Heart right ventricle (tissue), 16 donors: ENCODE measurements at regions of chr18 and their contacts with region 1.

Region 1: GRCh38 chr18:74251297-74252038 is 40.3 kb downstream of the CYB5A start:
- DNase-seq: no peak
- ATAC-seq: peak in 2 of 8 donors; percentile 5 to 32
- H3K4me3 ChIP-seq: no peak overlapping the region
- H3K27ac ChIP-seq: peak overlapping the region in 3 of 10 donors; percentile 23 to 74 (median 38)
- H3K4me1 ChIP-seq: peaks cover 0 to 44% (median 31%) of the 10 kb centered on the region in 9 donors
- H3K27me3 ChIP-seq: no peaks in the 10 kb centered on the region
- CTCF ChIP-seq: no peak

Region 2: GRCh38 chr18:74147779-74148542 is 103.5 kb before region 1 on chr18 and contains the starts of genes FBXO15 and TIMM21:
- intact Hi-C with region 1: loop called in 1 of 10 experiments (anchors 5 kb)
- DNase-seq: peak; percentile 96 to 97
- ATAC-seq: peak; percentile 96 to 98 (median 97)
- H3K4me3 ChIP-seq: peak within 1 kb of the TSS; percentile 62 to 96 (median 74)
- H3K27ac ChIP-seq: peak within 1 kb of the TSS; percentile 76 to 96 (median 90)
- H3K4me1 ChIP-seq: peaks cover 3 to 48% (median 36%) of the 10 kb centered on the region in 9 donors
- H3K27me3 ChIP-seq: no peaks in the 10 kb centered on the region
- CTCF ChIP-seq: no peak
- total RNA-seq, gene FBXO15: 0.19 to 1.3 (median 0.38) TPM in 7 of 10 donors, not detected in the others
- total RNA-seq, gene TIMM21: 81.9 to 141 (median 122) TPM

Region 3: GRCh38 chr18:74268933-74269620 is 17.6 kb after region 1 on chr18:
- intact Hi-C with region 1: no loop called
- DNase-seq: no peak
- ATAC-seq: peak; percentile 34 to 83 (median 70)
- H3K4me3 ChIP-seq: peak overlapping the region in 2 of 10 donors; percentile 1 to 5
- H3K27ac ChIP-seq: peak overlapping the region in 3 of 10 donors; percentile 5 to 68 (median 18)
- H3K4me1 ChIP-seq: peaks cover 6 to 46% (median 24%) of the 10 kb centered on the region in 9 donors
- H3K27me3 ChIP-seq: no peaks in the 10 kb centered on the region
- CTCF ChIP-seq: no peak

Region 4: GRCh38 chr18:74291771-74292540 is 40.5 kb after region 1 on chr18 and contains the start of gene CYB5A:
- intact Hi-C with region 1: loop called in 2 of 10 experiments (anchors 2 to 5 kb)
- DNase-seq: peak; percentile 99
- ATAC-seq: peak; percentile 98 to 100 (median 99)
- H3K4me3 ChIP-seq: peak within 1 kb of the TSS; percentile 59 to 100 (median 92)
- H3K27ac ChIP-seq: peak within 1 kb of the TSS in 9 of 10 donors; percentile 51 to 89 (median 76)
- H3K4me1 ChIP-seq: peaks cover 3 to 39% (median 28%) of the 10 kb centered on the region in 9 donors
- H3K27me3 ChIP-seq: no peaks in the 10 kb centered on the region
- CTCF ChIP-seq: no peak
- total RNA-seq, gene CYB5A: 61.0 to 121 (median 78.0) TPM

Region 5: DNA sequence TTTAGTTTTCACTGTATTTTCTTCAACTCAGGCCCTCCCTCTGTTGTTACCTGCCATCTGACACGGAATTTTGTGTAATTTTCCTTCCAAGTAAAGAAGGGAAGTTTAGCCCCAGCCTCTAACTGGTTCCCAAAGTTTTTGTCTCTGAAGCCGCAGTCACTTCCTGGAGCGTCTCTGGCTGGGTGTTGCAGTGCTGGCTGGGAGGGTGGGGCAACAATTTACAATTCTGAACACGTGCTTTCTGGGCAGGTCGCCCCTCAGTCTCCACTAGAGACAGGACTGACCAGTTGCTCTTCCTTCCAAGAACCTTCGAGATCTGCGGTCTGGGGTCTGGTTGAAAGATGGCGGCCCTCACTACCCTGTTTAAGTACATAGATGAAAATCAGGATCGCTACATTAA is 248.2 kb after region 1 on chr18:
- intact Hi-C with region 1: no loop called
- DNase-seq: peak; percentile 37 to 91
- ATAC-seq: peak in 4 of 8 donors; percentile 8 to 34 (median 28)
- H3K4me3 ChIP-seq: peak overlapping the region in 7 of 10 donors; percentile 18 to 48 (median 35)
- H3K27ac ChIP-seq: peak overlapping the region; percentile 33 to 87 (median 70)
- H3K4me1 ChIP-seq: peaks cover 0 to 64% (median 30%) of the 10 kb centered on the region in 9 donors
- H3K27me3 ChIP-seq: no peaks in the 10 kb centered on the region
- CTCF ChIP-seq: no peak